Endothelial cell of umbilical vein (primary cell): ENCODE measurements at regions of chr22 and their contacts with region 1.

Region 1: GRCh38 chr22:20885557-20886323 is 26.9 kb downstream of the SNAP29 start:
- DNase-seq: peak; percentile 88
- H3K4me3 ChIP-seq: no peak overlapping the region
- H3K27ac ChIP-seq: no peak overlapping the region
- H3K4me1 ChIP-seq: peaks cover 3% of the 10 kb centered on the region
- H3K27me3 ChIP-seq: no peaks in the 10 kb centered on the region
- CTCF ChIP-seq: peak; percentile 88 to 96
- POLR2A ChIP-seq: no peak

Region 2: DNA sequence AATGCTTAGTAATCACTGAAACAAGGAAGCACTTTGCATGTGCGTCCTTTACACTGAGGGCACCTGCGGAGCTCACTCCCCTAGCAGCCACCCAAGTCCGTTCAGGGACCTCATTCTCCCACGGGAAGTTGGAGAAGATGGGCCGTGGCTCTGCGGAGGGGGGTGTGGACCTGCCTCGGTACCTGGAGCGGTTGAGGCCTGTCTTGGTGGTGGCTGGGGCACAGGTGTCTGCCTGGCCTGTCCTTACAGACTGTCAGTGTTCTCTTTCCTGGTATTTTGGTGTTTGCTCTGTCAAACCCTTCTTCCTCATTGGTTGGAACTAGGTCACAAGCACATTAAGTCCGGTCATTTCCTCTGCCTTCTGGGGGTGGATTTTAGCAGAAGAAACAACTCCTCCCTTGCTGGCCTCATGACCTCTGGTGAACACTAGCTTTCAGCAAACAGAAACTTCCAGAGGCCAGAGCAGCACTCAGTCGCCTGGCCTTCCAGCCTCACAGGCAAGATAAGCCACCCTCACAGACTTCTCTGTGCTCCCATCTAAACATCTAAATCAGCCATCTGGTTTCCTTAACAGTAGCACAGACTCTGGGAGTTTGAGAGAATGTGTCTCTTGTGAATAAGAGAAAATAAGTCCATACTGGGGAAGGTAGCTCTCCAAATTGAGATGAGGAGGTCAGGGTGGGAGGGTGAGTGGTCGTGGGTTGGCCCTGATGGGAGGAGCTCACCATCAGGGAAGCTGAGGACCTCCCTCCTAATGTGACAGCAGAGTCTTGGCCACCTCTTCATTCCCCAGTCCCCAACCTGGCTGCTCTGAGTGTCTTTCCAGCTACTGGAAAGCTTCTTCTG is 18.3 kb before region 1 on chr22:
- CTCF ChIA-PET with region 1: interaction called, 14 read pairs
- POLR2A ChIA-PET with region 1: no interaction called
- dilution Hi-C with region 1: no loop called
- intact Hi-C with region 1: no loop called
- DNase-seq: peak; percentile 49
- H3K4me3 ChIP-seq: no peak overlapping the region
- H3K27ac ChIP-seq: no peak overlapping the region
- H3K4me1 ChIP-seq: peaks cover 4% of the 10 kb centered on the region
- H3K27me3 ChIP-seq: no peaks in the 10 kb centered on the region
- CTCF ChIP-seq: no peak
- POLR2A ChIP-seq: no peak

Region 3: GRCh38 chr22:20899827-20900423 is 14.2 kb after region 1 on chr22:
- CTCF ChIA-PET with region 1: interaction called, 12 read pairs
- POLR2A ChIA-PET with region 1: no interaction called
- dilution Hi-C with region 1: no loop called
- intact Hi-C with region 1: no loop called
- DNase-seq: no peak
- H3K4me3 ChIP-seq: no peak overlapping the region
- H3K27ac ChIP-seq: no peak overlapping the region
- H3K4me1 ChIP-seq: no peaks in the 10 kb centered on the region
- H3K27me3 ChIP-seq: peaks cover 0 to 2% of the 10 kb centered on the region in 2 experiments
- CTCF ChIP-seq: no peak
- POLR2A ChIP-seq: no peak

Region 4: GRCh38 chr22:20957316-20958101 is 71.8 kb after region 1 on chr22:
- CTCF ChIA-PET with region 1: interaction called, 27 read pairs
- POLR2A ChIA-PET with region 1: interaction called, 4 read pairs
- dilution Hi-C with region 1: no loop called
- intact Hi-C with region 1: loop called (anchors 1 kb)
- DNase-seq: no peak
- H3K4me3 ChIP-seq: peak overlapping the region; percentile 7 to 45 (median 24)
- H3K27ac ChIP-seq: no peak overlapping the region
- H3K4me1 ChIP-seq: peaks cover 10% of the 10 kb centered on the region
- H3K27me3 ChIP-seq: peaks cover 0 to 5% of the 10 kb centered on the region in 2 experiments
- CTCF ChIP-seq: no peak
- POLR2A ChIP-seq: no peak

Region 5: DNA sequence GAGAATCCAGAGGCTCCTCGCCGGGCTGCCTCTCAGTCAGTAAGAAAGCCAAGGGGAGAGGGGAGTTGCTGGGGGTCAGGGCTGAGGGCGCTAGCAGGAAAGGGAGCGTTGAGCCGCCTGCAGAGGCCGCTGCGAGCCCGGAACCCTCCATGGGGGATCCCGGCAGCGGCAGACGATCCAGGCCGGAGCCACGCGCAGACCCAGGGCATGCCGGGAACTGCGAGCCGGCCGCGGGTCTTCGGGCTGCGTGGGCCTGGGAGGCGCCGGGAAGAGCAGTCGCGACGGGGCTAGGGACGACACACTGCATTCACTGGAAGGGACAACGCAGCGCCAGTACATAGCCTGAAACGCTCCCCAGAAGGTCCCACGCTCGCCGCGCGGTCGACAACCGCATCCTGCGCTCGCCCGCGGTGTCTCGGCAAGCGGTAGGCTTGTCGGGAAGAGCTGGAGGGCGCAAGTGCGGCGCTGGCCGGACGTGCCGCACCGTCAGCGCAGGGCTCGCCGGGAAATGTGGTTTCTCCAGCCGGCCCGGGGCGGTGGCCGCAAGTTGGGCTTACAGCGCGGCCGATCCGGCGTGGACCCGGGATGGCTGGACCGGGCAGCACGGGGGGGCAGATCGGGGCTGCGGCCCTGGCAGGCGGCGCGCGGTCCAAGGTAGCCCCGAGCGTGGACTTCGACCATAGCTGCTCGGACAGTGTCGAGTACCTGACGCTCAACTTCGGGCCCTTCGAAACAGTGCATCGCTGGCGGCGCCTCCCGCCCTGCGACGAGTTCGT is 96.2 kb after region 1 on chr22 and contains the start of gene LZTR1:
- CTCF ChIA-PET with region 1: interaction called, 31 read pairs
- POLR2A ChIA-PET with region 1: interaction called, 3 read pairs
- dilution Hi-C with region 1: no loop called
- intact Hi-C with region 1: loop called (anchors 1 kb)
- DNase-seq: peak; percentile 91
- H3K4me3 ChIP-seq: peak within 1 kb of the TSS; percentile 54 to 92 (median 65)
- H3K27ac ChIP-seq: peak within 1 kb of the TSS; percentile 62
- H3K4me1 ChIP-seq: peaks cover 17% of the 10 kb centered on the region
- H3K27me3 ChIP-seq: no peaks in the 10 kb centered on the region
- CTCF ChIP-seq: peak; percentile 67 to 82
- POLR2A ChIP-seq: peak; percentile 96
- total RNA-seq, gene LZTR1: 60.1 and 86.8 TPM in 2 replicates

Region 6: GRCh38 chr22:21102659-21103267 is 217.0 kb after region 1 on chr22:
- CTCF ChIA-PET with region 1: interaction called, 10 read pairs
- POLR2A ChIA-PET with region 1: no interaction called
- dilution Hi-C with region 1: no loop called
- intact Hi-C with region 1: no loop called
- DNase-seq: peak; percentile 63
- H3K4me3 ChIP-seq: no peak overlapping the region
- H3K27ac ChIP-seq: no peak overlapping the region
- H3K4me1 ChIP-seq: no peaks in the 10 kb centered on the region
- H3K27me3 ChIP-seq: peaks cover 4 to 5% of the 10 kb centered on the region in 2 experiments
- CTCF ChIP-seq: peak; percentile 87 to 94
- POLR2A ChIP-seq: no peak